OCI-LY7 (cell line): ENCODE measurements at regions of chr22 and their contacts with region 1.

Region 1: DNA sequence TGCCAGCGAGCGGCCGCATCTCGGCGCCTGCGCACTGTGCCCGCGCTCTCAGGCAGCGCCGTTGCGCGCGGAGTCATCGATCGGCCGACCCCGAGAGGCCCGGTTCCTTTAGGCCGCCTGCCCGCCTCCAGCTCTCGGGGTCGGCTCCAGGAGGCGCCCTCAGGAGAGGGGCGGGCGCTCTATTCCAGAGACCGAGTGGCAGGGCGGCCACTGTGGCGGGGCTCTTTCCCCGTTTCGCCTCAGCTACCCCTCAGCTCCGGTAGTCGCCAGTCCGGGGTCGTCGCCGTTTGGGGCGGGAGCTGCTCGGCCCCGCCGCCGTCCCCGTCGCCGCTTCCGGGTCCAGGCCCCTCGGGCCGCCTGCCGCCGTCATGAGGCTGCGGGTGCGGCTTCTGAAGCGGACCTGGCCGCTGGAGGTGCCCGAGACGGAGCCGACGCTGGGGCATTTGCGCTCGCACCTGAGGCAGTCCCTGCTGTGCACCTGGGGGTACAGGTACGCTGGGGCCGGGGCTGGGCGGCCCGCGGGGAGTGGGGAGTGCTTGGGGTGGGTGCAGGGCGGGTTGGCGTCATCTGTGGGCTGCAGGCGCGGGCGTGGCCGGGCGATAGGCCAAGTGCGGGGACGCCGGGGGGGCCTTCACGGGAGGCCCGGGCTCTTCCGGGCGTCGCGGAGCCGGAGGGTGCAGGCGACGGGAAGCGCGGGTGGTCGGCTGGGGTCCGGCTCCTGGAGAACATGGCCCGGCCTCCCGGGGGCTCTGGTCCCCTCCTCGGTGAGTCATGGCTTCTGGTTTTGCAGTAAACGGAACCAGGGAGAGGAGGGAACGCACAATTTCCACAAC is at the start of gene FBXO7:
- DNase-seq: peak; percentile 90
- H3K4me3 ChIP-seq: peak within 1 kb of the TSS; percentile 93
- H3K27ac ChIP-seq: peak within 1 kb of the TSS; percentile 65
- H3K4me1 ChIP-seq: peaks cover 26% of the 10 kb centered on the region
- CTCF ChIP-seq: peak; percentile 41; the same call in 1 of the 2 replicates
- total RNA-seq, gene FBXO7: 62.1 and 73.8 TPM in 2 replicates

Region 2: DNA sequence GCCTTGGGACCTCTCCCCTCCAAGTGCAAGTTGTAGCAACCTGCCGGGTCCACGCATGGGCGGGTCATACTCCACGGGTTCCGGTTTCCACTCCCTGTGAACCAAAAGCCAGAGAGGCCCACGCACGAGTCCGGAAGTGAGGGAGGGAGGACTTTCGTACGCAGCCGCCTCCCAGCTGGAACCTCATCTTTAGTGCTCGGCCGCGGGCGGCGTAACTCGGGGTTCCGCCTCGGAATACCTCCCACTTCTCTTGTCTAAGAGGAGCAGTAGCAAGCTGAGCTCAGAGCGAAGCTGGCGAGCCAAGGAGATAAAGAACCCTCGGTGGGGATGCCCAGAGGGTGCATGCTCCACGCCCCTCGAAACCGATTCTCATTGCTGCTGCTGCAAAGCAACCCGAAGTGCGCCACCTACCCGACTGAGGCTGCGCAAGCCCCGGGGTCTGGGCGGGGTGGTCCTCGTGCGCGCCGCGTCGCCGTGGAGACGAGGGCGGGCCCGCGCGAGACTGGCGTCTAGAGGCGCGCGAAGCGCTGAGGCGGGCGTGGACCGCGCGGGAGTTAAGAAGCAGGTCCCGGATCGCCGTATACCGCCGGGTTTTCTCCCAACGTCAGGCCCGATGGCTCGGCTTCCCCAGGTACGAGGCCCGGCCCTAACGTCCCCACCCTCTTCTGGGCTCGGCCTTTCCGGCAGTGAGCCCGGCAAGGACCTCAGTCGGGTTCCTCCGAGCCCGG is 978.7 kb before region 1 on chr22 and contains the start of gene SFI1:
- CTCF ChIA-PET with region 1: no interaction called
- POLR2A ChIA-PET with region 1: no interaction called
- intact Hi-C with region 1: loop called (anchors 10 kb)
- DNase-seq: peak; percentile 95
- H3K4me3 ChIP-seq: peak within 1 kb of the TSS; percentile 89
- H3K27ac ChIP-seq: peak within 1 kb of the TSS; percentile 93
- H3K4me1 ChIP-seq: peaks cover 42% of the 10 kb centered on the region
- CTCF ChIP-seq: peak; percentile 64
- total RNA-seq, gene SFI1: 72.6 and 73.3 TPM in 2 replicates

Region 3: DNA sequence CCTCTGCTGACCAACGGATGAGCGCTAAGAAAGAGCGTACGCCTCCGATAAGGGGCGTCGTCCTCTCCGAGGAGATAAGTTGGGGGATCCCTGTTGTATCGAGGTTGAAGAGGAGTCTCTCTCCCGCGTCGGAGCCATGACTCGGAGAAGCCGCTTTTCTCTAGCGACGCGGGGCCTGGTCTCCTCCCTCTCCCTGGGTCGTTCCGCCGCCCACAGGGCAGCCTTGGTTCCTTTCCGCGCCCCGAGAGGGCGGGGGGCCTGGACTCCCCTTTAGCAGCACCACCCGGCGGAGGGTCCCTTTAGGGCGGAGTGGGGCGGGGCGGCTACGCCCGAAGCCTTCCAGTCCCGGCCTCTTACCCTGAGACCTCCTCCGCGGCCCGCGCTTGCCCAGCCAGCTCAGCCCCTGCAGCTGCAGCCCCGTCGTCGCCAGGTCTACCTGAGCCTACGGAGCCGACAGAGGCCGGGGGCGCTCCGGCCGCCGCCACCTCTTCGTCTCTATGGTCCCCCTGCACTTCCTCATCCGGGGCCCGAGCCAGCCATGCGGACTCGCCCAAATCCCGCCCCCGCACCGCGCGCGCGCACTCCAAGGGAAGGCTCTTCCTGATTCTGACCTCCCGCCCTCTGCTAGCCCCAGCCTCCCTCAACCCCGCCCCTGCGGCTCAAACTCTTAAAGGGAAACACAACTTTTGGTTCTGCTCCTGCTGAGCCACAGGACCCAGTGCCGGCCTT is 725.1 kb before region 1 on chr22 and contains the start of gene PRR14L:
- CTCF ChIA-PET with region 1: no interaction called
- POLR2A ChIA-PET with region 1: interaction called, 4 read pairs
- intact Hi-C with region 1: loop called (anchors 5 kb)
- DNase-seq: peak; percentile 97
- H3K4me3 ChIP-seq: peak within 1 kb of the TSS; percentile 95
- H3K27ac ChIP-seq: peak within 1 kb of the TSS; percentile 90
- H3K4me1 ChIP-seq: peaks cover 43% of the 10 kb centered on the region
- CTCF ChIP-seq: peak; percentile 45; the same call in 1 of the 2 replicates
- total RNA-seq, gene PRR14L: 15.9 and 21.9 TPM in 2 replicates

Region 4: GRCh38 chr22:31977141-31977841 is 497.6 kb before region 1 on chr22:
- CTCF ChIA-PET with region 1: no interaction called
- POLR2A ChIA-PET with region 1: no interaction called
- intact Hi-C with region 1: loop called (anchors 5 kb)
- DNase-seq: peak; percentile 76
- H3K4me3 ChIP-seq: no peak overlapping the region
- H3K27ac ChIP-seq: no peak overlapping the region
- H3K4me1 ChIP-seq: peaks cover 10% of the 10 kb centered on the region
- CTCF ChIP-seq: peak; percentile 91

Region 5: GRCh38 chr22:32144496-32145274 is 330.2 kb before region 1 on chr22:
- CTCF ChIA-PET with region 1: no interaction called
- POLR2A ChIA-PET with region 1: interaction called, 3 read pairs
- intact Hi-C with region 1: loop called (anchors 10 kb)
- DNase-seq: peak; percentile 60
- H3K4me3 ChIP-seq: no peak overlapping the region
- H3K27ac ChIP-seq: no peak overlapping the region
- H3K4me1 ChIP-seq: peaks cover 10% of the 10 kb centered on the region
- CTCF ChIP-seq: no peak

Region 6: GRCh38 chr22:32202539-32203180 is 272.2 kb before region 1 on chr22:
- CTCF ChIA-PET with region 1: no interaction called
- POLR2A ChIA-PET with region 1: no interaction called
- intact Hi-C with region 1: loop called (anchors 10 kb)
- DNase-seq: peak; percentile 45
- H3K4me3 ChIP-seq: no peak overlapping the region
- H3K27ac ChIP-seq: no peak overlapping the region
- H3K4me1 ChIP-seq: no peaks in the 10 kb centered on the region
- CTCF ChIP-seq: peak; percentile 69

Region 7: DNA sequence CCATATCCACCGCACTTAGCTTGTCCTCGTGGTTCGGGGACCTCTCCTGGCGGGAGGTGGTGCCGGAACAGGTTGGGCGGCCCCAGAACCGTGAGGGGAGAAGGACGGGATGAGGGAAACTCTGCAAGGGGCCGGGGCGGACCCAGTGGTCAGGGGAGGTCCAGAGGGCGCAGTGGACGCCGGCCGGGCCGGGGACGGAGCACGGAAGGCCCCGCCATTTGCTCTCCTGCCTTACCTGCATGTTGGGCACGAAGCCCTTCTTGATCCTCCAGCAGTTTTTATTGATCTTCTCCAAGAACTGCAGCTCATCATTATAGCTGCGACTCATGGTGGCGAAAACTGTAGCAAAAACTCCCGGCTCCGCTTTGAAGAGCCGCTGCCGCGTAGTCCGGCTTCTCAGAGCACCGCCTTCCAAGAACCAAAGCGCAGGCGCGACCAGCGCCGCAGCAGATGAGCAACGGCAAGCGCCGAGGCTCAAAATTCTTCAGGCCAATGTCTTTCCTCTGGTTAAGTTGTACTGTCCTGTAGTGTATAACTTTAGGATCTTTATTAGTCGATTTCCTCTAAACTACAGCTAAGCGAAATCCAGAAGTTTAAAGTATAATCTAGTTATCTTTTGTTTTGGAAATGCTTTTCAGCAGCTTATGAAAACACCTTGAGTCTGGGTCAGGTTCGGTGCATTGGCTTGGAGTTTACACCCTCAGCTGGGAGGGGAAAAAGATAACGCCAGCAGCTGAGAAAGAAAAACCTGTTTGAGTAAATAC is 62.8 kb before region 1 on chr22 and contains the start of gene RTCB:
- CTCF ChIA-PET with region 1: no interaction called
- POLR2A ChIA-PET with region 1: interaction called, 5 read pairs
- intact Hi-C with region 1: loop called (anchors 1 kb)
- DNase-seq: peak; percentile 91
- H3K4me3 ChIP-seq: peak within 1 kb of the TSS; percentile 88
- H3K27ac ChIP-seq: no peak within 1 kb of the TSS
- H3K4me1 ChIP-seq: peaks cover 31% of the 10 kb centered on the region
- CTCF ChIP-seq: 0 out of 2 replicates have a peak, but pooled peaks have one; percentile 15
- total RNA-seq, gene RTCB: 37.2 and 58.3 TPM in 2 replicates